A673 (cell line): ENCODE measurements at regions of chr3 and their contacts with region 1.

Region 1: GRCh38 chr3:128075516-128076482 is 23.6 kb downstream of the SEC61A1 start:
- DNase-seq: peak; percentile 93
- H3K4me3 ChIP-seq: peak overlapping the region; percentile 49
- H3K27ac ChIP-seq: no peak overlapping the region
- H3K4me1 ChIP-seq: peaks cover 17% of the 10 kb centered on the region
- H3K27me3 ChIP-seq: no peaks in the 10 kb centered on the region
- CTCF ChIP-seq: peak; percentile 86

Region 2: GRCh38 chr3:127083778-127084670 is 991.8 kb before region 1 on chr3:
- CTCF ChIA-PET with region 1: no interaction called
- POLR2A ChIA-PET with region 1: no interaction called
- intact Hi-C with region 1: no loop called
- DNase-seq: no peak
- H3K4me3 ChIP-seq: no peak overlapping the region
- H3K27ac ChIP-seq: no peak overlapping the region
- H3K4me1 ChIP-seq: no peaks in the 10 kb centered on the region
- H3K27me3 ChIP-seq: no peaks in the 10 kb centered on the region
- CTCF ChIP-seq: no peak

Region 3: DNA sequence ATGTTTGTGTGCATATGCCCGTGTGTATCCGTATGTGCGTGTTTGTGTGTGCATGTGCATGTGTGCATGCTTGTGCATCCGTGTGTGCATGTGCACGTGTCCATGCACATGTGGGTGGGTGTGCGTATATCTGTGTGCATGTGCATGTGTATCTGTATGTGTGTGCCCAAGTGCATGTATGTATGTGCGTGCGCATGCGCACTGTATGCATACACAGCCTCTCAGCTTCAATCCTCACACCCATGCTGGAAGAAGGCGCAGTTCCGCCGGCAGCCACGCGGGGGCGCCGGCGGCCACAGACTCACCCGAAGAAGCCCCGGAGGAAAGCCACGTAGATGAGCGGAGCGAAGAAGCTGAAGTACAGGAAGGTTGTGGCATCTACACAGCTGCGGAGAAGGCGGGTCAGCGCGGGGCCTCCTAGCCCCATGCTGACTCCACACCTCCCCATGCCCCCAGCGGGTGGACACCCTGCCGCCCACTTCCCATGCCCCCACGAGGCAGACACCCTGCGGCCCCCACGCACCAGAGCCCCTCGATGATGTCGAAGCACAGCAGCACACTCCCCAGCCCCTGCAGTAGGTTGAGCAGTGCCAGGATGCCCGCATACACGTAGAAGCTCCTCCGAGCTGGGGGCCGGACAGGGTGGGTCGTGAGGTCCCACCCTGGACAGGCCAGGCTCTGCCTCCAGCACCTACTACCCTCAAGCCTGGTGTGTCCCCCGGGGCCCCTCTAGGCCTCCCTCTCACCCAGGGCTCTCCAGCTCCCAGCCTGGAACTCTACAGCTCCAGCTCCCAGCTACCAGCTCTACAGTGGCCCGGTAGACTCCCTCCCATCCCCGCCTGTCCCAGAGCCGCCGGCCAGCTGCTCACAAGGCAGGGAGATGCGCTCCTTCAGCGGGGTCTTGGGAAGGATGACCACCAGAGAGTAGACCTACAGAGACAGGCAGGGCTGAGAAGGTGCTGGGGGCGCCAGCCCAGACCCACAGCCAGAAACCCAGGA is 500.6 kb before region 1 on chr3:
- CTCF ChIA-PET with region 1: no interaction called
- POLR2A ChIA-PET with region 1: interaction called, 19 read pairs
- intact Hi-C with region 1: no loop called
- DNase-seq: peak; percentile 92
- H3K4me3 ChIP-seq: no peak overlapping the region
- H3K27ac ChIP-seq: no peak overlapping the region
- H3K4me1 ChIP-seq: no peaks in the 10 kb centered on the region
- H3K27me3 ChIP-seq: no peaks in the 10 kb centered on the region
- CTCF ChIP-seq: peak; percentile 99

Region 4: GRCh38 chr3:128123538-128124368 is 48.0 kb after region 1 on chr3 and contains the start of gene RUVBL1:
- CTCF ChIA-PET with region 1: no interaction called
- POLR2A ChIA-PET with region 1: no interaction called
- intact Hi-C with region 1: loop called (anchors 5 kb)
- DNase-seq: peak; percentile 99
- H3K4me3 ChIP-seq: peak within 1 kb of the TSS; percentile 91
- H3K27ac ChIP-seq: peak within 1 kb of the TSS; percentile 87
- H3K4me1 ChIP-seq: peaks cover 16% of the 10 kb centered on the region
- H3K27me3 ChIP-seq: no peaks in the 10 kb centered on the region
- CTCF ChIP-seq: no peak
- total RNA-seq, gene RUVBL1: 153 and 156 TPM in 2 replicates

Region 5: GRCh38 chr3:128133273-128134084 is 57.7 kb after region 1 on chr3:
- CTCF ChIA-PET with region 1: interaction called, 5 read pairs
- POLR2A ChIA-PET with region 1: no interaction called
- intact Hi-C with region 1: loop called (anchors 1 kb)
- DNase-seq: peak; percentile 69
- H3K4me3 ChIP-seq: no peak overlapping the region
- H3K27ac ChIP-seq: no peak overlapping the region
- H3K4me1 ChIP-seq: no peaks in the 10 kb centered on the region
- H3K27me3 ChIP-seq: peaks cover 20% of the 10 kb centered on the region
- CTCF ChIP-seq: peak; percentile 76

Region 6: GRCh38 chr3:128145337-128145736 is 69.5 kb after region 1 on chr3:
- CTCF ChIA-PET with region 1: no interaction called
- POLR2A ChIA-PET with region 1: no interaction called
- intact Hi-C with region 1: no loop called
- DNase-seq: no peak
- H3K4me3 ChIP-seq: no peak overlapping the region
- H3K27ac ChIP-seq: no peak overlapping the region
- H3K4me1 ChIP-seq: no peaks in the 10 kb centered on the region
- H3K27me3 ChIP-seq: peaks cover 6% of the 10 kb centered on the region
- CTCF ChIP-seq: no peak

Region 7: GRCh38 chr3:128367753-128368152 is 292.0 kb after region 1 on chr3:
- CTCF ChIA-PET with region 1: no interaction called
- POLR2A ChIA-PET with region 1: no interaction called
- intact Hi-C with region 1: no loop called
- DNase-seq: no peak
- H3K4me3 ChIP-seq: no peak overlapping the region
- H3K27ac ChIP-seq: no peak overlapping the region
- H3K4me1 ChIP-seq: no peaks in the 10 kb centered on the region
- H3K27me3 ChIP-seq: no peaks in the 10 kb centered on the region
- CTCF ChIP-seq: no peak

Region 8: DNA sequence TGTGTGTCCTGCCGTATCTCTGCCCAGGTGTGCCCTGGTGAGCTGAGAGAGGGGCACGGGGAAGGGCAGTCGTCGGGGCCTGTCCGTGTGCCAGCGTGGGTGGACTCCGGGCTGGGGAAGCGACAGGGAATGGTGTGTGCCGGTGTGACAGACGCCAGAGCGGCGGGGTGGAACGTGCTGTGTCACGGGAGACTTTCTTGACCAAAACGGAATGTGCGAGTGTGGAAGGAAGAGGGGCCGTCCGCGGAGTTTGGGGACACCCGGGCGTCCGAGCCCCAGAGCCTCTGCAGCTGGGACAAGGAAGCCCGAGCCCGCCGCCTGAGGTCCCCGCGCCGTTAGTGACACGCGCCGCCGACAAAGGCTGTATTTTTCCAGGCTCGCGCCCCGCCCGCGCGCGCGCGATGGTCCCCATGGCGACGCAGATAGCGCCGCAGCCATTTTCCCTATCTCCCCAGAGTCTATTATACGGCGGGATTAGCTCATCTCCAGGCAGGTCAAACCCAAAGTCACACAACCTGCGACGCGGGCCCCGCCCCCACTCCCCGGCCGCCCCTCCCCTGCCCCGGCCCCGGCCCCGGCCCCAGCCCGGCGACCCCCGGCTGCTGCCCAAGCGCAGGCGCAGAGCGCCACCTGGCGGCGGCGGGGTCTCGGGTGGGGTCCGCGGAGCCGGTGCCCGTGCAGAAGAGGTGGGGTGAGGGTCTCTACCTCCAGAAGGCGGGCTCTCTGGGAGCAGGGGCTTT is 421.8 kb after region 1 on chr3:
- CTCF ChIA-PET with region 1: no interaction called
- POLR2A ChIA-PET with region 1: no interaction called
- intact Hi-C with region 1: loop called (anchors 5 kb)
- DNase-seq: peak; percentile 85
- H3K4me3 ChIP-seq: peak overlapping the region; percentile 52
- H3K27ac ChIP-seq: peak overlapping the region; percentile 73
- H3K4me1 ChIP-seq: no peaks in the 10 kb centered on the region
- H3K27me3 ChIP-seq: peaks cover under 1% of the 10 kb centered on the region
- CTCF ChIP-seq: peak; percentile 73

Region 9: GRCh38 chr3:128584412-128585020 is 508.7 kb after region 1 on chr3:
- CTCF ChIA-PET with region 1: no interaction called
- POLR2A ChIA-PET with region 1: interaction called, 6 read pairs
- intact Hi-C with region 1: loop called (anchors 10 kb)
- DNase-seq: peak; percentile 91
- H3K4me3 ChIP-seq: no peak overlapping the region
- H3K27ac ChIP-seq: no peak overlapping the region
- H3K4me1 ChIP-seq: peaks cover 2% of the 10 kb centered on the region
- H3K27me3 ChIP-seq: no peaks in the 10 kb centered on the region
- CTCF ChIP-seq: peak; percentile 92